Caco-2 (cell line): ENCODE measurements at regions of chr11 and their contacts with region 1.

Region 1: GRCh38 chr11:61679893-61680621 is at the start of gene DAGLA:
- DNase-seq: peak; percentile 64 to 87
- H3K4me3 ChIP-seq: peak within 1 kb of the TSS; percentile 82
- H3K4me3 Mint-ChIP-seq: no peak within 1 kb of the TSS
- H3K27ac Mint-ChIP-seq: peak within 1 kb of the TSS; percentile 85
- H3K4me1 ChIP-seq: peaks cover 47% of the 10 kb centered on the region
- H3K4me1 Mint-ChIP-seq: peaks cover 12% of the 10 kb centered on the region
- H3K27me3 ChIP-seq: no peaks in the 10 kb centered on the region
- H3K27me3 Mint-ChIP-seq: no peaks in the 10 kb centered on the region
- CTCF ChIP-seq: peak; percentile 90 to 93
- total RNA-seq, gene DAGLA: 9.4 and 9.5 TPM in 2 replicates

Region 2: DNA sequence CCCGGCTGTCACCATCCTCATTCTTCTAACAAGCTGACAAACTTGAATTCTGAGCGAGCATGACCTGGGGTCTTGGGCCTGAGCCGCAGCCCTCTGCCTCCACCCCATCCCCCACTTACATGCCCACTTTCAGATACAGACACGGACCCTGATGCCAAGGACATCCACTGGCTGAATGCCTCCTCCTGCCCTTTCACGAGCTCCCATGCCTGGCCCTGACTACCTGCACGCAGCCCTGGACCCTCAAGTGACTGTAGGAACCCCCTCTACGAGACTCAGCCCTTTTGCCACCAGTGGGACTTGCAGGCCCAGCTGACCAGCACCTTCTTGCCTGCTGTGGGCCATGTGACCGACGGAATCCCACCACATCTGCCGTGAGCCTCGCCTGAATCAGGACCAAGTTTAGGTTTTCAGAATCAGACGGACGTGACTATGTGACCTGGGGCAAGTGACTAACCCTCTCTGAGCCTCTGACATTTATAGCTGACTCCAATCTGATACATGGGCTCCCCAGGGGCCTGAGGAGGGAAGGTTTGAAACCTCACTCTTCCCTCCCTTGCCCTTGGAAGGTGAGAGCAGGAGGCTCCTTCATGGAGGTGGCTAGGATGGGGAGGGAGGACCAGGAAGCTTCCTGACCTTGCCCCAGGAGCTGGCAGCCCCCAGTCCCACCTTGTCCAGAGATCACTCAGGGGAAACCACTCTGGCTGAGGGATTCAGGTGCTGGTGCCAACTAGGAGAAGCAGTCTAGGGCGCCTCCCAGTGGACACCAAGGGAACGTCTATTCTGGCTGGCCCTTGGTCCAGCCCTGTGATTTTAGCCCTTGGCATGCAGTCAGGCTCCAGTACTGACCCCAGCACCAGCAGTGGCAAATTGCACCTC is 52.3 kb before region 1 on chr11:
- CTCF ChIA-PET with region 1: no interaction called
- POLR2A ChIA-PET with region 1: no interaction called
- intact Hi-C with region 1: no loop called
- DNase-seq: peak; percentile 80 to 87
- H3K4me3 ChIP-seq: no peak overlapping the region
- H3K4me3 Mint-ChIP-seq: peak overlapping the region; percentile 70
- H3K27ac Mint-ChIP-seq: peak overlapping the region; percentile 95
- H3K4me1 ChIP-seq: peaks cover 39% of the 10 kb centered on the region
- H3K4me1 Mint-ChIP-seq: peaks cover 49% of the 10 kb centered on the region
- H3K27me3 ChIP-seq: no peaks in the 10 kb centered on the region
- H3K27me3 Mint-ChIP-seq: no peaks in the 10 kb centered on the region
- CTCF ChIP-seq: peak; percentile 90 to 95

Region 3: DNA sequence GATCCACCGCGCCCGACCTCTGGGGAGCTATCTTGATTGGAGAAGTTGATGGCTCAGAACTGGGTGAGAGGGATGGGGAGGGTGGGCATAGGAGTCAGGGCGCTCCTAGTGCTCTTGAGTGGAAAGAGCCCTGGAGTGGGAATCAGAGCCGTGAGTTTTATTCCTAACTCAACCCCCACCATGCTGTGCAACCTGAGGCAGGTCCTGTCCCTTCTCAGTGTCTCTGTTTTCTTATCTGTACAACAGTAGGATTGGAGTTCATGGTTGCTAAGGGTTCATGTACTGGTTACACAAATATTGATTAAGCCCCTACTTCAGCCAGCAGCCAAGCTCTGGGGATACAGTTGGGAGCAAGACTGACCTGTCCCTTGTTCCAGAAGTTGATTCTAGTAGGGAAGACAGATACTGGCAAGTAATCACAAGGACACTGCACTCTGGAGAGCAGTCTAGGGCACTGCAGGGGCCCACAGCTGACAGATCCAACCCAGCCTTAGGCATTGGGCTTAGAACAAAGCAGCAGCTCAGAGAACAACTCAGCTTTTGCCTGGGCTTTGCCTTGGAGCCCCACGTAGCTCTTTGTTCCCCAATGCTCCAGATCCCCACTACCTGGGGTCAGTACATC is 12.3 kb before region 1 on chr11:
- CTCF ChIA-PET with region 1: interaction called, 13 read pairs
- POLR2A ChIA-PET with region 1: interaction called, 6 read pairs
- intact Hi-C with region 1: loop called (anchors 2 kb)
- DNase-seq: peak; percentile 43 to 54
- H3K4me3 ChIP-seq: peak overlapping the region; percentile 47
- H3K4me3 Mint-ChIP-seq: peak overlapping the region; percentile 84
- H3K27ac Mint-ChIP-seq: peak overlapping the region; percentile 88
- H3K4me1 ChIP-seq: peaks cover 46% of the 10 kb centered on the region
- H3K4me1 Mint-ChIP-seq: peaks cover 21% of the 10 kb centered on the region
- H3K27me3 ChIP-seq: no peaks in the 10 kb centered on the region
- H3K27me3 Mint-ChIP-seq: no peaks in the 10 kb centered on the region
- CTCF ChIP-seq: peak; percentile 24 to 36

Region 4: DNA sequence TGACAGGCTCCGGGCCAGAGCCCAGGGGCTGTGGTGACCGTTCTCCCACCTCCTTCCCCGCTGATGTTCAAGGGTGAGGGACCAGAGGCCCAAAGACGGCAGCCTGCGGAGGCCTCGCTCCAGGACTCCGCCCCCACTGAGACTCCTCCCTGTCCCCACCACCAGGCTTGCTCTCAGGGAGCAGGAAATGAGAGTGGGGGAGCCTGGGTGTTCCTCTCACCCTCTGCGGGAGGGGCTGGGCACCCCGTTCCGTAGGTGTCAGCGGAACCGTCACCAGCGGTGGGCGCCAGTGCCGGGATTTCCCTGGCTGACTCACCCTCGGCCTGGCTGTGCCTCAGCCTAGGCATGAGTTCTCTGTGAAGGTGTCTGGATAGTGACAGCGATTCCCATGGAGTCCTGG is 15.9 kb after region 1 on chr11:
- CTCF ChIA-PET with region 1: interaction called, 17 read pairs
- POLR2A ChIA-PET with region 1: no interaction called
- intact Hi-C with region 1: loop called (anchors 1 kb)
- DNase-seq: no peak
- H3K4me3 ChIP-seq: no peak overlapping the region
- H3K4me3 Mint-ChIP-seq: no peak overlapping the region
- H3K27ac Mint-ChIP-seq: peak overlapping the region; percentile 59
- H3K4me1 ChIP-seq: peaks cover 64% of the 10 kb centered on the region
- H3K4me1 Mint-ChIP-seq: peaks cover 16% of the 10 kb centered on the region
- H3K27me3 ChIP-seq: no peaks in the 10 kb centered on the region
- H3K27me3 Mint-ChIP-seq: no peaks in the 10 kb centered on the region
- CTCF ChIP-seq: no peak

Region 5: GRCh38 chr11:61701242-61701886 is 21.3 kb after region 1 on chr11:
- CTCF ChIA-PET with region 1: interaction called, 5 read pairs
- POLR2A ChIA-PET with region 1: no interaction called
- intact Hi-C with region 1: loop called (anchors 1 kb)
- DNase-seq: peak; percentile 72 to 78
- H3K4me3 ChIP-seq: no peak overlapping the region
- H3K4me3 Mint-ChIP-seq: no peak overlapping the region
- H3K27ac Mint-ChIP-seq: no peak overlapping the region
- H3K4me1 ChIP-seq: peaks cover 39% of the 10 kb centered on the region
- H3K4me1 Mint-ChIP-seq: peaks cover 16% of the 10 kb centered on the region
- H3K27me3 ChIP-seq: no peaks in the 10 kb centered on the region
- H3K27me3 Mint-ChIP-seq: no peaks in the 10 kb centered on the region
- CTCF ChIP-seq: peak; percentile 52 to 83

Region 6: GRCh38 chr11:61718621-61719302 is 38.7 kb after region 1 on chr11:
- CTCF ChIA-PET with region 1: no interaction called
- POLR2A ChIA-PET with region 1: no interaction called
- intact Hi-C with region 1: loop called (anchors 5 kb)
- DNase-seq: no peak
- H3K4me3 ChIP-seq: no peak overlapping the region
- H3K4me3 Mint-ChIP-seq: no peak overlapping the region
- H3K27ac Mint-ChIP-seq: no peak overlapping the region
- H3K4me1 ChIP-seq: peaks cover 19% of the 10 kb centered on the region
- H3K4me1 Mint-ChIP-seq: peaks cover 13% of the 10 kb centered on the region
- H3K27me3 ChIP-seq: no peaks in the 10 kb centered on the region
- H3K27me3 Mint-ChIP-seq: no peaks in the 10 kb centered on the region
- CTCF ChIP-seq: no peak